Activated CD4-positive, alpha-beta memory T cell treated with anti-CD3 and anti-CD28 coated beads for 36 hours (primary cell): ENCODE measurements at regions of chr3 and their contacts with region 1.

Region 1: GRCh38 chr3:151276687-151277042 is 1.7 kb downstream of the P2RY14 start:
- DNase-seq: peak; percentile 55
- H3K4me3 Mint-ChIP-seq: peak overlapping the region; percentile 53
- H3K27ac Mint-ChIP-seq: peak overlapping the region; percentile 84
- H3K4me1 Mint-ChIP-seq: peaks cover 38% of the 10 kb centered on the region
- H3K27me3 Mint-ChIP-seq: no peaks in the 10 kb centered on the region

Region 2: DNA sequence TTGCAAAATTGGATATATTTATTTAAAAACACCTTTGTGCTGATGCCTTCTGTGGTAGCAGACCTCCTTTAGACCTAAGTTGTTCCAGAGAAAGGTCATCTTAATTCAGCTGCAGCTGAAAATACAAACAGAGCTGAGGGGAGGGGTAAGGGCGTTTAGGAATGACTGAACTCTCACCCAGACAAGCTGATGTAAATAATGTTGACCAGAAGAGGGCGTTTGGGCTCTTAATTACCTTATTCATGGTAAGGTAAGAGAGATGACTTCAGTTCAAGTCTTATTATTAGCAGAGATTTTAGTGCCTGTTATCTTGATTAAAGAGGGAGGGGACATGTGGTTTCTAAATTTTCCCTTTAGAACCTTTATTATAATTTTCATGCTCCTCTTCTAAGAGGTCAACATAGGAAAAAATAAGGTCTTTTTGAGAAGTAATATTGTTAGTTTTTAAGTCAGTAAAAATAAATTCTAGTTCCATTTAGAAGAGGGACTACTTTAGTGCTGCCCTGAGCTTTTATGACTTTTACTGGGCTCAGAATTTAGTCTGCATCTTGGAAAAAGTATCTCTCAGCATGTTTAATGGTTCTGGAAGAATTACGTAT is 119.9 kb before region 1 on chr3:
- CTCF ChIA-PET with region 1: interaction called, 18 read pairs
- POLR2A ChIA-PET with region 1: no interaction called
- intact Hi-C with region 1: no loop called
- DNase-seq: no peak
- H3K4me3 Mint-ChIP-seq: no peak overlapping the region
- H3K27ac Mint-ChIP-seq: no peak overlapping the region
- H3K4me1 Mint-ChIP-seq: no peaks in the 10 kb centered on the region
- H3K27me3 Mint-ChIP-seq: no peaks in the 10 kb centered on the region

Region 3: DNA sequence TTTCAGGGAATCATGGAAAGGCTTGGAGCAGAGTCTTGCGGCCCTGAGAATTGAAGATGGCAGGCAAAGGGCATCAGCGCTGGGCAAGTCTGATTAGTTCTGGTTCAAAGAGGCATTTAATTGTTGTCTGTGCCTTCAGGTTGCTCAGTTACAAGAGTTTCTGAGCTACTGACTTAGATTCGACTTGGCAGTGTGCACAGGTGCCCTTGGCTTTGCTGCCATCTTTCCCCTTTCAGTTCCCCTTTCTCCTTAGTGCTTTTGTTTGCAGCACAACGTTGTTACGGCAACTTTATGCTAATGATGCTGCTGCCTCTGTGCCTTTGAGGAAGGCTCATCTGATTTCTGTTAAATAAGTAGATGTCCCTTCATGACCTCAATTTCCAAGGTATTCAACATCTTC is 10.8 kb before region 1 on chr3:
- CTCF ChIA-PET with region 1: interaction called, 6 read pairs
- POLR2A ChIA-PET with region 1: no interaction called
- intact Hi-C with region 1: loop called (anchors 1 kb)
- DNase-seq: no peak
- H3K4me3 Mint-ChIP-seq: no peak overlapping the region
- H3K27ac Mint-ChIP-seq: no peak overlapping the region
- H3K4me1 Mint-ChIP-seq: peaks cover 19% of the 10 kb centered on the region
- H3K27me3 Mint-ChIP-seq: no peaks in the 10 kb centered on the region